Caco-2 (cell line): ENCODE measurements at regions of chr3 and their contacts with region 1.

Region 1: GRCh38 chr3:42572278-42572677 is 9.5 kb downstream of the SEC22C start:
- DNase-seq: peak; percentile 71 to 74
- H3K4me3 ChIP-seq: no peak overlapping the region
- H3K4me3 Mint-ChIP-seq: no peak overlapping the region
- H3K27ac Mint-ChIP-seq: no peak overlapping the region
- H3K4me1 ChIP-seq: no peaks in the 10 kb centered on the region
- H3K4me1 Mint-ChIP-seq: no peaks in the 10 kb centered on the region
- H3K27me3 ChIP-seq: no peaks in the 10 kb centered on the region
- H3K27me3 Mint-ChIP-seq: no peaks in the 10 kb centered on the region
- CTCF ChIP-seq: peak; percentile 34 to 76

Region 2: GRCh38 chr3:42600111-42600988 is 28.1 kb after region 1 on chr3 and contains the start of gene NKTR:
- CTCF ChIA-PET with region 1: no interaction called
- POLR2A ChIA-PET with region 1: no interaction called
- intact Hi-C with region 1: loop called (anchors 2 kb)
- DNase-seq: peak; percentile 99
- H3K4me3 ChIP-seq: peak within 1 kb of the TSS; percentile 84
- H3K4me3 Mint-ChIP-seq: peak within 1 kb of the TSS; percentile 93
- H3K27ac Mint-ChIP-seq: peak within 1 kb of the TSS; percentile 87
- H3K4me1 ChIP-seq: peaks cover 17% of the 10 kb centered on the region; the same call in 1 of the 2 replicates
- H3K4me1 Mint-ChIP-seq: peaks cover 10% of the 10 kb centered on the region
- H3K27me3 ChIP-seq: no peaks in the 10 kb centered on the region
- H3K27me3 Mint-ChIP-seq: no peaks in the 10 kb centered on the region
- CTCF ChIP-seq: peak in 1 of 2 experiments; percentile 15
- total RNA-seq, gene NKTR: 66.6 and 67.9 TPM in 2 replicates

Region 3: GRCh38 chr3:42613462-42613861 is 41.2 kb after region 1 on chr3:
- CTCF ChIA-PET with region 1: no interaction called
- POLR2A ChIA-PET with region 1: no interaction called
- intact Hi-C with region 1: loop called (anchors 2 kb)
- DNase-seq: no peak
- H3K4me3 ChIP-seq: no peak overlapping the region
- H3K4me3 Mint-ChIP-seq: no peak overlapping the region
- H3K27ac Mint-ChIP-seq: no peak overlapping the region
- H3K4me1 ChIP-seq: 0 out of 2 replicates have a peak, but pooled peaks cover 4% of the 10 kb centered on the region
- H3K4me1 Mint-ChIP-seq: peaks cover 5% of the 10 kb centered on the region
- H3K27me3 ChIP-seq: no peaks in the 10 kb centered on the region
- H3K27me3 Mint-ChIP-seq: no peaks in the 10 kb centered on the region
- CTCF ChIP-seq: peak; percentile 27 to 30

Region 4: DNA sequence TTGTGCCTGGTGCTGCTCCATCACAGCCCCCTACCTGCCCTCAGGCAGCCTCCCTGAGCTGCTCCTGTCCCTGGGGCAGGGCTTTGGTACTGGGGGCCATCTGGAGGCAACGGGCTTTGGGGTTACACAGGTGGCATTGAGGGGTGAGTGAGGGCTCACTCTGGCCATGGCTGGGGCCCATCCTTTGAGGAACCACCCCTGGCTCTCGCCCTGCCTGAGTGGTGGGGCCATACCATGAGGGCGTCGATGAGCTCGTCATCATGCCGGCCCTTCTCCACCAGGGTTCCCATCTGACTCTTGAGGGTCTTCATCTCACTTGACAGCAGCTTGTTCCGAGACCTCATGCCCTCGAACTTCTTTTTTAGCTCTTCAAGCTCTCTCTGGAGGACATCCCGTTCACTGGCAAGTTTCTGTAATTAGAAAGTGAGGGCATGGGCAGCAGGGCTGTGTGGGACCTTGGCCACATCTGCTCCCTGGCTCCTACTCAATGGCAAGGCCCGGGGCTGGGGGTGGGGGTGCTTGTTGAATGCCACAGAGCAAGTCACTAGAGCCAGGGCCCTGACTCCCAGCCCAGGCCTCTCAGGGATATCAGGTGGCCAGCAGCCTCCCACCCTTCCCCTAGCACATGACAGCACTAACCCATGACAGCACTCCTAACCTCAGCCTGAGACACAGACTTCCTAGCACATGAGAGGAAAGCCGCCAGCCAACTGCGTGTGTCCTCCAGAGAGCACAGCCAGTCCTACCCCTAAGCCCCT is 167.3 kb after region 1 on chr3:
- CTCF ChIA-PET with region 1: no interaction called
- POLR2A ChIA-PET with region 1: no interaction called
- intact Hi-C with region 1: loop called (anchors 5 kb)
- DNase-seq: no peak
- H3K4me3 ChIP-seq: no peak overlapping the region
- H3K4me3 Mint-ChIP-seq: no peak overlapping the region
- H3K27ac Mint-ChIP-seq: no peak overlapping the region
- H3K4me1 ChIP-seq: no peaks in the 10 kb centered on the region
- H3K4me1 Mint-ChIP-seq: no peaks in the 10 kb centered on the region
- H3K27me3 ChIP-seq: no peaks in the 10 kb centered on the region
- H3K27me3 Mint-ChIP-seq: no peaks in the 10 kb centered on the region
- CTCF ChIP-seq: no peak

Region 5: DNA sequence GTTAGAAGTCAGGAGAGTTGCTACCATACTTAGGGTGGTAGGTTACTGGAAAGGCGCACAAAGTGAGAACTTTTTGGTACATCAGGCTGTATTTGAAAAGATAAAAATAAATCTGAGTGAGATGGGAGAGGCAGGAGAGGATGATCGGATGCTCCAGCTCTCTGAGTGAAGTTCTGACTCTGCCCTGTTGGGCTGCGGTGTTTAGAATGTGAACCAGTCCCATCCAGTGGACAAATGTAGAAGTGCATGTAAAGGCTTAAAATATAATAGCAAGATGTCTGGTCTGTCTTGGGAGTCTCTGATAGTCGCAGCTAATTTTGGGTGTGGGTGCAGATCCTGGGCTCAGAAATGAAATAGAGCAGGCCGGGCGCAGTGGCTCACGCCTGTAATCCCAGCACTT is 267.3 kb after region 1 on chr3:
- CTCF ChIA-PET with region 1: no interaction called
- POLR2A ChIA-PET with region 1: no interaction called
- intact Hi-C with region 1: loop called (anchors 10 kb)
- DNase-seq: peak; percentile 48 to 61
- H3K4me3 ChIP-seq: no peak overlapping the region
- H3K4me3 Mint-ChIP-seq: no peak overlapping the region
- H3K27ac Mint-ChIP-seq: no peak overlapping the region
- H3K4me1 ChIP-seq: no peaks in the 10 kb centered on the region
- H3K4me1 Mint-ChIP-seq: peaks cover 4% of the 10 kb centered on the region
- H3K27me3 ChIP-seq: no peaks in the 10 kb centered on the region
- H3K27me3 Mint-ChIP-seq: no peaks in the 10 kb centered on the region
- CTCF ChIP-seq: peak; percentile 73 to 77

Region 6: DNA sequence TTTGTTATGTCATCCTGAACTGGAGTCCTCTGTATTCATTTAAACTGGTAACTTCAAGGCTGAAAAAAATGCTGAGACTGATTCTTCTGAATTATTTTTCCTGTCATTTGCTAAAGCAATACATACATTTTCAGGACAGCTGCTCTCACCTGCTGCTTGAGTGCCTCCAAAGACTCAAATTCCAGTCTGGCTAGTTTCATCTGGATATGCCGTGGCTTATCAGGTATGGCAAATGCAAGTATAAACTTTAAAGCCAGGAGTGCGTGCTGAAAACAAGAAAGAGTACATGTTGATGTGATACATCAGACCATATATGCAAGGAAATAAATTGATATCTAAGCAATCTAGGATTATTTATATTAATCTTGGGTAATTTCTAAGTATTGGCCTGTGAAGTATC is 860.2 kb after region 1 on chr3:
- CTCF ChIA-PET with region 1: no interaction called
- POLR2A ChIA-PET with region 1: no interaction called
- intact Hi-C with region 1: no loop called
- DNase-seq: no peak
- H3K4me3 ChIP-seq: no peak overlapping the region
- H3K4me3 Mint-ChIP-seq: no peak overlapping the region
- H3K27ac Mint-ChIP-seq: no peak overlapping the region
- H3K4me1 ChIP-seq: no peaks in the 10 kb centered on the region
- H3K4me1 Mint-ChIP-seq: no peaks in the 10 kb centered on the region
- H3K27me3 ChIP-seq: no peaks in the 10 kb centered on the region
- H3K27me3 Mint-ChIP-seq: no peaks in the 10 kb centered on the region
- CTCF ChIP-seq: no peak

Region 7: DNA sequence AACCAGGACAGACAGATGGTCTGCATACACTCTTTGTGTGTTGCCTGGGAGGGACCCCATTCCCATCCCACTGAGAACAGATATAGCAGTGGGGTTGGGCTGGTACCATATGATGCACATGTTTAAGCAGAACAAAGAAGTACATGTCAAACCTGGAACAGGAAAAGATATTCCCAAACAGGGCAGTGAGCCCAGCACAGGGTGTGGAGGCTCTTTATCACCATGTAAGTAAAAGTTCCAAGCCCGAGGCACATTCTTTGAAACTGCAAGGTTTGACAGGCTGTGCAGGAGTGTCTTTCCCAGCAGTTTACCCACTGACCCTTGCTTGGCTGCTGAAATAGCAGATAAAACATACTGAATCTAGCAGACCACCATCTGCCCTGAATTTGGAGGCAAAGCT is 1910.4 kb after region 1 on chr3:
- CTCF ChIA-PET with region 1: no interaction called
- POLR2A ChIA-PET with region 1: interaction called, 12 read pairs
- intact Hi-C with region 1: no loop called
- DNase-seq: no peak
- H3K4me3 ChIP-seq: no peak overlapping the region
- H3K4me3 Mint-ChIP-seq: no peak overlapping the region
- H3K27ac Mint-ChIP-seq: no peak overlapping the region
- H3K4me1 ChIP-seq: 0 out of 2 replicates have a peak, but pooled peaks cover 6% of the 10 kb centered on the region
- H3K4me1 Mint-ChIP-seq: no peaks in the 10 kb centered on the region
- H3K27me3 ChIP-seq: no peaks in the 10 kb centered on the region
- H3K27me3 Mint-ChIP-seq: no peaks in the 10 kb centered on the region
- CTCF ChIP-seq: no peak